B cell (primary cell): ENCODE measurements at regions of chr3 and their contacts with region 1.

Region 1: GRCh38 chr3:111967651-111968274 is 11.1 kb upstream of the ABHD10 start:
- DNase-seq: peak; percentile 83
- ATAC-seq: peak; percentile 96
- H3K4me3 ChIP-seq: no peak overlapping the region
- H3K4me3 Mint-ChIP-seq: no peak overlapping the region
- H3K27ac ChIP-seq: no peak overlapping the region
- H3K27ac Mint-ChIP-seq: no peak overlapping the region
- H3K4me1 ChIP-seq: peaks cover 2 to 8% of the 10 kb centered on the region in 2 donors
- H3K4me1 Mint-ChIP-seq: peaks cover 4% of the 10 kb centered on the region
- H3K27me3 ChIP-seq: no peaks in the 10 kb centered on the region
- H3K27me3 Mint-ChIP-seq: no peaks in the 10 kb centered on the region
- CTCF ChIP-seq: peak; percentile 96

Region 2: DNA sequence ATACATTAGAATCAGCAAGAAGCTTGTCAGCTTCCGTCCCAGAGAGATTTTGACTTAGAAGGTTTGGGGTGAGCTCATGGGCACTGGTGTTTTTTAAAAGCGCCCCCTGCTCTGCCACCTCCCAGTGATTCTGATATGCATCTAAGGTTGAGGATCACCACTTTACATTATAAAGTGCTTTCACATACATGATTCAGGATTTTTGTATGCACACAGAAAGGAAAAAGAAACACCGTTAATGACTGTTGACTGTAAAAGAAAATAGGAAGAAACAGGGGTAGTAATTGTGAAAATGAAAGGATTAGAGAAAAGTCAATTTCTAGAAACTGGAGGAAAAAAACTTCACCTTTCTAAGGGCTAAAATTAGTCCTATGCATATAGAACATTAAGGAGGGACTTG is 267.7 kb before region 1 on chr3:
- CTCF ChIA-PET with region 1: interaction called, 12 read pairs
- POLR2A ChIA-PET with region 1: no interaction called
- intact Hi-C with region 1: no loop called
- DNase-seq: no peak
- ATAC-seq: no peak
- H3K4me3 ChIP-seq: no peak overlapping the region
- H3K4me3 Mint-ChIP-seq: no peak overlapping the region
- H3K27ac ChIP-seq: no peak overlapping the region
- H3K27ac Mint-ChIP-seq: no peak overlapping the region
- H3K4me1 ChIP-seq: peaks cover 3 to 6% of the 10 kb centered on the region in 2 donors
- H3K4me1 Mint-ChIP-seq: peaks cover 17% of the 10 kb centered on the region
- H3K27me3 ChIP-seq: no peaks in the 10 kb centered on the region
- H3K27me3 Mint-ChIP-seq: no peaks in the 10 kb centered on the region
- CTCF ChIP-seq: no peak

Region 3: GRCh38 chr3:111859974-111860859 is 107.5 kb before region 1 on chr3:
- CTCF ChIA-PET with region 1: interaction called, 31 read pairs
- POLR2A ChIA-PET with region 1: no interaction called
- intact Hi-C with region 1: loop called (anchors 5 kb)
- DNase-seq: peak; percentile 85
- ATAC-seq: peak; percentile 72
- H3K4me3 ChIP-seq: peak overlapping the region; percentile 78 to 90 (median 87)
- H3K4me3 Mint-ChIP-seq: peak overlapping the region; percentile 93
- H3K27ac ChIP-seq: peak overlapping the region; percentile 56 to 76
- H3K27ac Mint-ChIP-seq: peak overlapping the region; percentile 80
- H3K4me1 ChIP-seq: peaks cover 11 to 18% of the 10 kb centered on the region in 2 donors
- H3K4me1 Mint-ChIP-seq: peaks cover 19% of the 10 kb centered on the region
- H3K27me3 ChIP-seq: peaks cover 0 to 14% (median 5%) of the 10 kb centered on the region in 4 experiments
- H3K27me3 Mint-ChIP-seq: peaks cover 14% of the 10 kb centered on the region
- CTCF ChIP-seq: peak; percentile 51

Region 4: DNA sequence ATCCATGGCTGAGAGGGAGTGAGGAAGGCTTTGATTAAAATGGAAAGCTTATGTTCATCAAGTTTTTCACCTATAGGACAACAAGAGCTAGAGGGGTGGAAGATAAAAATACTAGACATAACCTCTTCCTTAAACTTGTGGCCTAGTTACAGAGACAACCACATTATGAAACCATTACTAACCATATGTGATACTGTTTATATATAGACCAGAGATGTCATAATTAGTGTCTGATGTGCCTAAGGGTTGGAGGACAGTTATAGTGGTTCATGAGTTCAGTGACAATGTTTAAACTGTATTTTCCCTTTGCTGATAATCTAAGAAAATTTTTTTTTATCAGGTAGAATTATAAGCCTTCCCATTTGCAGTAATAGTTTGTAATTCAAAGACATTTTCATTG is 85.0 kb before region 1 on chr3:
- CTCF ChIA-PET with region 1: no interaction called
- POLR2A ChIA-PET with region 1: no interaction called
- intact Hi-C with region 1: no loop called
- DNase-seq: no peak
- ATAC-seq: no peak
- H3K4me3 ChIP-seq: no peak overlapping the region
- H3K4me3 Mint-ChIP-seq: no peak overlapping the region
- H3K27ac ChIP-seq: no peak overlapping the region
- H3K27ac Mint-ChIP-seq: no peak overlapping the region
- H3K4me1 ChIP-seq: no peaks in the 10 kb centered on the region
- H3K4me1 Mint-ChIP-seq: peaks cover 3% of the 10 kb centered on the region
- H3K27me3 ChIP-seq: no peaks in the 10 kb centered on the region
- H3K27me3 Mint-ChIP-seq: no peaks in the 10 kb centered on the region
- CTCF ChIP-seq: no peak

Region 5: DNA sequence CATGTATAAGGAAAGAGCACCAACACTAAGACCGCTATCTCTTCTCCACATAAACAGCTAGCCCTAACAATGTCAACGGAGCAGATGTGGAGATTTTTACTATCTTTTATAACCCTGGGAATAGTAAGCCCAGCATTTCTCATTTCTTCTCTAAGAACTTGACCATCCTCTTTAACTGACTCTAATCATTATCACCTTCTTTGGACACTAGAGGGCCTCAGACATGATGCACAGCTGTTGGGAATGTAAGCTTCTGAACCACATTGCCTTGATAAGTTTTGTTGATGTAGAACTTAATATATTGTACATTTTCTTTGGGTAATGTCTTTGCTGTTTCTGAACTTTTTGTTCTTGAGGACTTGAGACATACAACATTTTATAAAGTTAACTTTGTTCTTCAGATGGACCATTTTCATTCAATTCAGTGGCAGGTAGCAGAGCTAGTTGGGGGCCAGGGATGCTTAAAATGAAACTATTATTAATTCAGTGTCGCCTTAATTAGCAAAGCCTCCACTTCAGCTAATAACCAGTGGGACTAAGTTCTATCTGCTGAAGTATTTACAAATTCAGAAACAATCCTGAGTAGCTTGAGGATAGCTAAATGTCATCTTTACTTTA is 21.4 kb after region 1 on chr3:
- CTCF ChIA-PET with region 1: interaction called, 16 read pairs
- POLR2A ChIA-PET with region 1: no interaction called
- intact Hi-C with region 1: no loop called
- DNase-seq: peak; percentile 55
- ATAC-seq: peak; percentile 76
- H3K4me3 ChIP-seq: no peak overlapping the region
- H3K4me3 Mint-ChIP-seq: no peak overlapping the region
- H3K27ac ChIP-seq: no peak overlapping the region
- H3K27ac Mint-ChIP-seq: no peak overlapping the region
- H3K4me1 ChIP-seq: no peaks in the 10 kb centered on the region
- H3K4me1 Mint-ChIP-seq: peaks cover 12% of the 10 kb centered on the region
- H3K27me3 ChIP-seq: no peaks in the 10 kb centered on the region
- H3K27me3 Mint-ChIP-seq: no peaks in the 10 kb centered on the region
- CTCF ChIP-seq: peak; percentile 80